Dendritic cell treated with granulocyte-macrophage colony-stimulating factor and Interleukin-4, amounts not matched to agents 40 ng/mL and 50 ng/mL, for 4 days (primary cell): ENCODE measurements at regions of chr19 and their contacts with region 1.

Region 1: DNA sequence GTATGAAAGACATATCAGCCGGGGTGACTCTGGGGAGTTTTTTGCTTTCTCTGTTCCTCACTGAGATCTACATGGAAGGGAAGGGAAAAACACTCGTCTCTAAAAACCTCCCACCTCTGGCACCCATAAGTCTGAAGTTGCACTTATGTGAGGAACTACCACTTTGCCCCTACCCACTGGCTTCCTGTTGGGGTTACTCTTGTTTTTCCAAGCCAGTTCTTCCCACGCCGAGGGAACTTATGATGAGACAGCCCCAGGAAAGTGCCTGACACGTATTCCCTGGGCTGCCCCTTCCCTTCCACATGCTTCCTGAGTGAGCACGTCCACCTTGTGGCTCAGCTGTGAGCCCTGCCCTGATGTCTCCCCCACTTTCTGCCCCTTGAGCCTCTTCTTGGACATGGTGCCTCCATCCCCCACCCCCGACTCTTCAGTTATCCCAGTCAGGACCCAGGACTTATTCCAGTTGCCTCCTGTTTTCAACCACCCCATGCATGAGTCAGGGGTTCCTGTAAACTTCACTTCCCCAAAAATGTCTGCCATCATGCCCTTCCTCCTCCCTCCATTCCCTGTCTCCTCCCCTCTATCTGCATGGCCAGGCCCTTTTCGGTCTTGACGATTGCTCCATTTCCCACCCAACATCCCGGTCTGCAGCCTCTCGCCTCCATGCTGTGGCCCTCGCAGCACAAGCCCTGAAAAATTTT is 5.1 kb upstream of the SIGLEC7 start:
- H3K4me3 Mint-ChIP-seq: peak overlapping the region; percentile 81
- H3K27ac Mint-ChIP-seq: peak overlapping the region; percentile 98
- H3K4me1 Mint-ChIP-seq: peaks cover 90% of the 10 kb centered on the region
- H3K27me3 Mint-ChIP-seq: no peaks in the 10 kb centered on the region

Region 2: DNA sequence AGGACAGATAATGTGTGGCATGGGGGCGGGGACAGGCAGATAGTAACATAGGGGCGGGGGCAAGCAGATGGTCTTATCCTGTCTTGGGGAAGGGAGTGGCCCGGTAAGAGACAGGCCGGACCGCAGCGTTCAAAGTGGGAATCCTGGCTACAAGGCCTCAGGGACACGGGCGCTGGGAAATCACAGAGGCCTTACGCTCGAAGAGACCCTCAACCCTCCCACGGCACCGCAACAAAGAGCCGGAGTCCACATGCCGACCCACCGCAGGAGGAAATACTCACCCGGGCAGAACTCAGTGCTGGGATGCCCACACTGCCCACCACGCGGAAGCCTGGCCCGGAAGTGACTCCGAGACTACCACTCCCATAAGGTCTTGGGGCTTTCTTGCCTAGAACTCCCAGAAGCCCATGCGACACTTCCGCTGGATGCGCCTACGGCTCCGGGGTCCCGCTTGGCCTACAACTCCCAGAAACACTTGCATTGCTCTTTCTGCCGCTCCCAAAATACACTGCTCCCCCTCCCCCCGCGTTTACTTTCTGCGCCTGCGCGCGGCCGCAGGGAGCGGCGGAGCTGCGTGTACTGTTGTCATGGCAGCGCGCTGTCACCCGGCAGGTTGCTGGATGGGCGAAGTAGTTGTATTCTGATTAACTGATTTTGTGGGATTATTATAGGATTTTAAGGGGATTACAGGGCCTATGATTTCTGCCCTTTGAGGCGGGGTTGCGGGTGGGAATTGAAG is 28.8 kb before region 1 on chr19 and contains the start of gene CTU1:
- intact Hi-C with region 1: loop called (anchors 2 kb)
- H3K4me3 Mint-ChIP-seq: peak within 1 kb of the TSS; percentile 87
- H3K27ac Mint-ChIP-seq: peak within 1 kb of the TSS; percentile 88
- H3K4me1 Mint-ChIP-seq: peaks cover 33% of the 10 kb centered on the region
- H3K27me3 Mint-ChIP-seq: no peaks in the 10 kb centered on the region

Region 3: GRCh38 chr19:51123381-51123800 is 13.6 kb before region 1 on chr19:
- intact Hi-C with region 1: loop called (anchors 2 kb)
- H3K4me3 Mint-ChIP-seq: peak overlapping the region; percentile 88
- H3K27ac Mint-ChIP-seq: peak overlapping the region; percentile 97
- H3K4me1 Mint-ChIP-seq: peaks cover 99% of the 10 kb centered on the region
- H3K27me3 Mint-ChIP-seq: no peaks in the 10 kb centered on the region